Vagina (tissue), 2 donors: ENCODE measurements at regions of chr5 and their contacts with region 1.

Region 1: DNA sequence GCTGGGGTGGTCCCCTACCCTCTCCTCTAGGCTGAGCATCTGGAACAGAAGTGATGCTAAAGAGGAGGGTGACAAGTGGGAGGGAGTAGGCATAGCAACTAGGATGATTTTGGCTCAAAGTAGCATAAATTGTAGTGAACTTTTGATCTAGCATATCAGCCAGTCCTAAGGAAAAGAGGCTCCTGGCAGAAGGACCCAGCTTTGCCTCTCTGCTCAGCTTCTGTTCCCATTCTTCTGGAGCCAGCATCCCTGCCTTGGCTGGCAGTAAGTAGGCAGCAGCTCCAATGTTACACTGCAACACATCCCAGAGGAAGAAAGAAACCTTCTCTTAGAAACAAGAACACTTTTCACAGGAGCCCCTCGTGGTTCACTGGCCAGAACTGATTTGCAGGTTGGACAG is 487.0 kb downstream of the MTRR start:
- DNase-seq: no peak
- H3K4me3 ChIP-seq: no peak overlapping the region
- H3K27ac ChIP-seq: no peak overlapping the region
- H3K4me1 ChIP-seq: no peaks in the 10 kb centered on the region
- H3K27me3 ChIP-seq: no peaks in the 10 kb centered on the region
- CTCF ChIP-seq: no peak
- POLR2A ChIP-seq: no peak

Region 2: GRCh38 chr5:7445068-7445467 is 910.9 kb before region 1 on chr5:
- intact Hi-C with region 1: no loop called
- DNase-seq: no peak
- H3K4me3 ChIP-seq: no peak overlapping the region
- H3K27ac ChIP-seq: no peak overlapping the region
- H3K4me1 ChIP-seq: no peaks in the 10 kb centered on the region
- H3K27me3 ChIP-seq: no peaks in the 10 kb centered on the region
- CTCF ChIP-seq: no peak
- POLR2A ChIP-seq: no peak

Region 3: DNA sequence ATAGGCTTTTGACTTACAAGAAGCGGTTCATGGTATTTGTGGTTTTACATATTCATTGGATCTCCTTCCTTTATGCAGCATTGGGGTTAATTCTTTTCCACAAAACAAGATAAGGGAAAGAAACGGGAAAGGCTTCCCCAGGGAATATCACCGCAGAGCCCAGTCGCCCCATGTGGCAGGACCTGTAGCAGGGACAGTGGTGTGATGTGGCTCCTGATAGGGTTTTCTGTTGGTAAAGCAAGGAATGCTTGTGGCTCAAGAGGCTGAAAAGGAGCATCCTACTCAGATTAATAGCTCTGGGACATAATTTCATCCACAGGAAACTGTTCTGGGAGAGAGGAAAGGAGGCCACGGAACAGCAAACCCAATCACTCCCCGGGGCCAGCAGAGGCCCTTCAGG is 212.9 kb after region 1 on chr5:
- intact Hi-C with region 1: no loop called
- DNase-seq: no peak
- H3K4me3 ChIP-seq: no peak overlapping the region
- H3K27ac ChIP-seq: no peak overlapping the region
- H3K4me1 ChIP-seq: no peaks in the 10 kb centered on the region
- H3K27me3 ChIP-seq: no peaks in the 10 kb centered on the region
- CTCF ChIP-seq: no peak
- POLR2A ChIP-seq: no peak

Region 4: DNA sequence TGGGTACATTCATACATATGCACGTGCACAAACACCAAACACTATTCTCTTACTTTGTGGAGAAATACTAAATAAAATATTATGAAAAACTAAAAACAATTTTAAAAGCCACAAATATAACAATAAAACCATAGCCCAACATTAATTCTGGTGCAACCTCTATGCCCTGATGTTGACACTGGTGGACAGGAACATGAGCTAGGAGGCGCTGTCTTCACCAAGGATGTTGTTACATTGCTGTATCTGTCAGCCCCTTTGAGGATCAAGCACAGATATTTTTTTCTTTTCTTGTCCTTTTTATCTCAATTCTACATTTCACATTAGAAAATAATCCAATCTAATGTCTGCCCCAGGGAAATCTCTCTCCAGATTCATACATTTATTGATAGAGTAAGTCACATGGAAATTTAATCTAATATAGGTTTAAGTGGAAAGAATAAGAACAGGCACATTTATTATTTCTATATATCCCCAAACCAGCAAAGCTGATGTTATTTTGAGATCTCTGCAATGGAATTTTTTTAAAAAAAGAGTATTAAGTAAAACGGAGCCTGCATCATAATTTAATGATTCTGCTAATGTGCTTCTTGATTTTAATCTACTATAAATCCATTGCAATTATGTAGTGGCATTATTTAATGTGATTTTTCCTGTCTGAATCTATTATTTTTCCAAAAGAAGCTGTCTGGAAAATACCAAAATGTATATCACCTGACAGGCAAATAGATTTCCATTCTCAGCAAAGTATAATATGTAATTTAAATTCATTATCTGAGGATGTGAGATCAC is 229.4 kb after region 1 on chr5:
- intact Hi-C with region 1: no loop called
- DNase-seq: no peak
- H3K4me3 ChIP-seq: no peak overlapping the region
- H3K27ac ChIP-seq: no peak overlapping the region
- H3K4me1 ChIP-seq: no peaks in the 10 kb centered on the region
- H3K27me3 ChIP-seq: no peaks in the 10 kb centered on the region
- CTCF ChIP-seq: no peak
- POLR2A ChIP-seq: no peak

Region 5: DNA sequence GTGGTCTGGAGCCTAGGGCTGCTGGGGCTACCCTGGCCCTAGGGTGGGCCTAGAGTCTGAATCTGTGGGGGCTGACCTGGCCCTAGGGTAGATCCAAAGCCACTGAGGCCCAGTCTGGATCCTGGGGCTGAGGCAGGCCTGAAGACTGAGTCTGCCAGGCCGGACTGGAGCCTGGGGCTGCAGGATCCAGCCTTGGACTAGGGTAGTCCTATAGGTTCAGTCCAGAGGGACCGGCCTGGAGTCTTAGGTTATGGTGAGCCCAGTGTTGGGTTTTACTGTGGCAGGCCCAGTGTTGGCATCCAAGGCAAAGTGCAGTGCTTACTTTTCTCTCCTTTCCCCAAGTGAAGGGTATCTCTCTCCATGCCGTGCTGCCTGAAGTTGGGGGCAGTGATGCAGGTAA is 1502.1 kb after region 1 on chr5:
- intact Hi-C with region 1: loop called (anchors 5 kb)
- DNase-seq: no peak
- H3K4me3 ChIP-seq: no peak overlapping the region
- H3K27ac ChIP-seq: no peak overlapping the region
- H3K4me1 ChIP-seq: no peaks in the 10 kb centered on the region
- H3K27me3 ChIP-seq: no peaks in the 10 kb centered on the region
- CTCF ChIP-seq: no peak
- POLR2A ChIP-seq: no peak